ENCODE measurements at regions of chr14 and their contacts with region 1.

Region 1: GRCh38 chr14:21383848-21384493 is at the start of gene SUPT16H:
- DNase-seq: peak; percentile 98 to 99
- ATAC-seq: peak; percentile 100
- H3K4me3 ChIP-seq: peak within 1 kb of the TSS; percentile 77 to 83
- H3K27ac ChIP-seq: peak within 1 kb of the TSS; percentile 72 to 84
- H3K4me1 ChIP-seq: peaks cover 0 to 2% of the 10 kb centered on the region in 2 donors
- H3K27me3 ChIP-seq: no peaks in the 10 kb centered on the region
- total RNA-seq, gene SUPT16H: 47.2 to 50.5 TPM

Region 2: DNA sequence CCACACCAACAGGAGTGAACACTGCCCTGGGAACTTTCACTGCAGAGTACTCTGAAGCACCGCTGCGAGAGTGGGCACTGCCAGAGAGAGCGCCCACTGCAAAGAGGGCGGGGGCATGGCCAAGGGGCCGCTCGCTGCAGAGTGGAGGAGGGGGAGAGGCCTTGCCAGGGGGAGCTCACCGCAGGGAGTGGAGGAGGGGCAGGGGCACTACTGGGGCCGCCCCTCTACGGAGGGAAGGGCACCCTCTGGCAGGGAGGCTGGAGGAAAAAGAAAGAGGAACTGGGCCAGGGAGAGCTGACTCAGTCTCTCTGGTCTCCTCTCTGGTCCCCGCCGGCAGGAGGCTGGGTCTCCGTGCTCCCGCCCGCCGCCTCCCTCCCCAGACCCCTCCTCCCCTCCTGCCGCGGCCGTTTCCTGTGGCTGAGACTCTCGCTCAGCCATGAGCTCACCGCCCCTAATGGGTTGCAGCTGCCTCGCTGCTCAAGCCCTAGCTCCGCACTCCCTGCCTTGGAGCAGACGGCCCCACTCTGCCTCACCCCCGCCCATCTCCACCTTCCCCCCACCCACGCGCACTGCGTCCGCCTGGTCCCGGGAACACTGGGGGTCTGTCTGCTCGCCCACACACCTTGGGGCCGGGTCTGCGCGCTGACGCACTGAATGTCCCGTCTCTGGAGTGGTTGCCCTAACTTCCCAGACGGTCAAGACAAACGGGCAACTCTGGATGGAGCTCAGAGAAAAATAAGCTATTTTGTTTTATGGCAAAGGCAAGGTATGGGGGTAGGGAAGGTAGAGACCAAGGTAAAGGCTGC is 312.5 kb before region 1 on chr14:
- intact Hi-C with region 1: loop called in 1 of 2 experiments (anchors 10 kb)
- DNase-seq: peak; percentile 96
- ATAC-seq: peak; percentile 88
- H3K4me3 ChIP-seq: peak overlapping the region; percentile 51 to 63
- H3K27ac ChIP-seq: peak overlapping the region; percentile 34 to 49
- H3K4me1 ChIP-seq: no peaks in the 10 kb centered on the region
- H3K27me3 ChIP-seq: no peaks in the 10 kb centered on the region

Region 3: DNA sequence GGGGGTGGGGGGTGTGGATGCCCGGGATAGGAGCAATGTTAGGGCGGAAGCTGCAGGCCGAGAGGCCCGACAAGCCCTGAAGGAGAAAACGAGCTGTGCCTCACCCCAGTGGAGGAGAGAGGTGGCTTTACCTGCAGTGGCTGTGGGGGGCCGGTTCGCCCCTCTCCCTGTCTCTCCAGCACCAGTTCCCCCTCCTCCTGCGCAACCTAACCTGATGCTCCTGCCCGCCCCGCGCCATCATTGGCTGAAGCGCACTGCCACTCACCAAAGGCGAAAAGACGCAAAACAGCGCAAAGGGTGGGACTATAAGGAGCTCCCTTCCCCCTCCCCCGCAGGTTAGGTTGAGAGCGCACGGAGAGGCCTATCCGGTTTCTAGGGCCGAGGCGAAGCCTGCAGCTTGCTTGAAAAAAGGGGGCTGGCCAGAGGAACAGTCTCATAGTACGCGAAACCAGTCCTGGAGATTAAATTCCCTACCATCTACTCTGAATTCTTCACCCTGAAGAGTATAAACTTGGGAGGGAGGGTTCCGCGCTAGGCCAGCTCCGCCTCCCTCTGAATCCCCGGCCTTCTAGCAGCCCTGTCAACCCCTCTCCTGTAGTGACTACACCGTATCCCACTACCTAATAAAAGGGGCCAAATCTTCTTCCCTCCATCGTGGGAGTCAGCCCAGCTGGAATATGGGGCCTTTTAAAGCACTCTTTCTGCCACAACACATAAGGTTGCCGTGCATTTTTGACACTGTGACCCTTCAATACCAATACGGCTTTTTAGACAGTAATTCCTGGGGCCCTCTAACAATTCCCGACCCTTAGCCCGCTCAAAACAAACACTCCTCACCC is 53.3 kb after region 1 on chr14:
- intact Hi-C with region 1: loop called in 1 of 2 experiments (anchors 1 kb)
- DNase-seq: peak; percentile 99 to 100
- ATAC-seq: peak; percentile 100
- H3K4me3 ChIP-seq: peak overlapping the region; percentile 86 to 87
- H3K27ac ChIP-seq: peak overlapping the region; percentile 7 to 81
- H3K4me1 ChIP-seq: no peaks in the 10 kb centered on the region
- H3K27me3 ChIP-seq: no peaks in the 10 kb centered on the region

Region 4: GRCh38 chr14:21626491-21627230 is 242.7 kb after region 1 on chr14:
- intact Hi-C with region 1: no loop called
- DNase-seq: no peak
- ATAC-seq: no peak
- H3K4me3 ChIP-seq: no peak overlapping the region
- H3K27ac ChIP-seq: no peak overlapping the region
- H3K4me1 ChIP-seq: no peaks in the 10 kb centered on the region
- H3K27me3 ChIP-seq: no peaks in the 10 kb centered on the region

Measured in aorta (tissue), 5 donors.